Activated CD8-positive, alpha-beta T cell treated with anti-CD3 and anti-CD28 coated beads for 36 hours (primary cell): ENCODE measurements at regions of chr17 and their contacts with region 1.

Region 1: GRCh38 chr17:57671667-57672632 is 73.1 kb downstream of the CCDC182 start:
- DNase-seq: peak; percentile 82
- ATAC-seq: peak; percentile 87
- H3K4me3 Mint-ChIP-seq: no peak overlapping the region
- H3K27ac Mint-ChIP-seq: peak overlapping the region; percentile 86
- H3K4me1 Mint-ChIP-seq: peaks cover 37% of the 10 kb centered on the region
- H3K27me3 Mint-ChIP-seq: no peaks in the 10 kb centered on the region
- CTCF ChIP-seq: peak; percentile 94

Region 2: DNA sequence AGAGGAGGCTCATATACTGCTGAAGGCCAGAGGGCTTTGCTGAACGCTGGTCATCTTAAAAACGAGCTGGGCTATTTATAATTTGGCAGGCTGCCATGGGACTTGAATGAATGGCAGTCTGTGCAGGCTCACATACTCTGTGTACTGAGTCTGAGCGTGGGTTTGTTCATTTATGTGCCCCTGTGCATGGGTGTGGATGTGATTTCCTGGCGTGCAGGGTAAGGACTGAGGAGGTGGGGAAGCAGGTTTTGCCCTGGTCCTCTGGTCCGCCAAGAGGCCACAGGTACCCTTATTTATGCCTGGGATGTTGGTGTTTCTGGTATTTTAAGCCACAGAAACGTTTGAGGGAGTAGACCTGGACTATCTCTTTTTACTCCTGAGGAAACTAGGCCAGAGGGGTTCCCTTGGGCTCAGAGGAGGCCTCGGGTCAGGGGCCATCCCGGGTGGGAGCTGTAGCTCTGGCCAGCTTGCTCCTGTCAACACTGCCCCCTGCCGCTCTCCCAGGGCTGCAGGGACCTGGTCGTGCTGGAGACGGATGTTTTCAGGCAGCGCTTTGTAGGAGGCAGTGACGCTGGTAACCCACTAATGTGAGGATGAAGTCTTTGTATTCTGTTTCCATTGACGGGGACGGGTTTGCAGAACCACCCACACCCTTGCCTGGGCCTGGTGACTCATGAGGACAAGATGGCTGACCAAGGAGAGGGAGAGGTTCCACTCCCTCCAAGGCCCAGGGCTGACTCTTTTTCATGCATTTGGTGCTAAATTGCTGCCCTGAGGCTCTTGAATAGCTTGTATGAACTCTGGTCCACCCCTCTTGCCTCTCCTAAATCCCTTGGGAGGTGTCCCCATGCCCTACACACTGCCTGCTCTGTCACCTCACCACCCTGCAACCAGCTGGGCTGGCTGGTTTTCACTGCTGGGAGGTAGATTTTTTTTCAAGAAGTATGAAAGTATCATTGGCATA is 231.1 kb before region 1 on chr17:
- CTCF ChIA-PET with region 1: interaction called, 10 read pairs
- POLR2A ChIA-PET with region 1: no interaction called
- intact Hi-C with region 1: no loop called
- DNase-seq: peak; percentile 95
- ATAC-seq: peak; percentile 86
- H3K4me3 Mint-ChIP-seq: peak overlapping the region; percentile 50
- H3K27ac Mint-ChIP-seq: peak overlapping the region; percentile 97
- H3K4me1 Mint-ChIP-seq: peaks cover 57% of the 10 kb centered on the region
- H3K27me3 Mint-ChIP-seq: no peaks in the 10 kb centered on the region
- CTCF ChIP-seq: peak; percentile 76

Region 3: DNA sequence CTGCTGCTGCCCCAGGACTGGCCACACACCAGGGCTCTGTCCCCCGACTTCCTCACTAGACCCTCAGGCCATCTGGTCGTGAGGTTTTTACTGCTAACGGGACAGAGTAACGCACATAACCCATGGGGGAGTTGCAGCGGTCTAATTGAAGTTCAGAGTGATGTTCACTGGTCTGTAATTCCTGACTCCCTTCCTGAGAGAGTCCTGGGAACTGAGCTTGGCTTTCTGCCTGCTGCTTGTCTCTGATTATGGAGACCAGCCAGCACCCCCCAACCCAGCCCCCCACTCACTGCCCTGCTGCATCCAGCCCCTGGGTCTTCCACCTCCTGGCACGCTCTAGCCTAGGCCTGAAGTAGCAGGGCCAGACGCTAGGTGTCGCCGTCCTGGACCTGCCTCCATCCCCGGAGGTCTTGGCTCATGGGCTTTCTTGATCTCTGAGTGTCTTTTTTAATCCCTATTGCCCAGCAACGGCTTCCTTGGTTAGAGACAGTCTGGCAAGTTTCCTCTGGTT is 119.8 kb before region 1 on chr17:
- CTCF ChIA-PET with region 1: interaction called, 18 read pairs
- POLR2A ChIA-PET with region 1: no interaction called
- intact Hi-C with region 1: no loop called
- DNase-seq: peak; percentile 60
- ATAC-seq: peak; percentile 79
- H3K4me3 Mint-ChIP-seq: no peak overlapping the region
- H3K27ac Mint-ChIP-seq: no peak overlapping the region
- H3K4me1 Mint-ChIP-seq: peaks cover 36% of the 10 kb centered on the region
- H3K27me3 Mint-ChIP-seq: no peaks in the 10 kb centered on the region
- CTCF ChIP-seq: peak; percentile 48

Region 4: GRCh38 chr17:57597531-57598453 is 74.2 kb before region 1 on chr17:
- CTCF ChIA-PET with region 1: interaction called, 67 read pairs
- POLR2A ChIA-PET with region 1: interaction called, 3 read pairs
- intact Hi-C with region 1: loop called (anchors 5 kb)
- DNase-seq: peak; percentile 55
- ATAC-seq: no peak
- H3K4me3 Mint-ChIP-seq: no peak overlapping the region
- H3K27ac Mint-ChIP-seq: peak overlapping the region; percentile 95
- H3K4me1 Mint-ChIP-seq: peaks cover 60% of the 10 kb centered on the region
- H3K27me3 Mint-ChIP-seq: no peaks in the 10 kb centered on the region
- CTCF ChIP-seq: peak; percentile 81

Region 5: DNA sequence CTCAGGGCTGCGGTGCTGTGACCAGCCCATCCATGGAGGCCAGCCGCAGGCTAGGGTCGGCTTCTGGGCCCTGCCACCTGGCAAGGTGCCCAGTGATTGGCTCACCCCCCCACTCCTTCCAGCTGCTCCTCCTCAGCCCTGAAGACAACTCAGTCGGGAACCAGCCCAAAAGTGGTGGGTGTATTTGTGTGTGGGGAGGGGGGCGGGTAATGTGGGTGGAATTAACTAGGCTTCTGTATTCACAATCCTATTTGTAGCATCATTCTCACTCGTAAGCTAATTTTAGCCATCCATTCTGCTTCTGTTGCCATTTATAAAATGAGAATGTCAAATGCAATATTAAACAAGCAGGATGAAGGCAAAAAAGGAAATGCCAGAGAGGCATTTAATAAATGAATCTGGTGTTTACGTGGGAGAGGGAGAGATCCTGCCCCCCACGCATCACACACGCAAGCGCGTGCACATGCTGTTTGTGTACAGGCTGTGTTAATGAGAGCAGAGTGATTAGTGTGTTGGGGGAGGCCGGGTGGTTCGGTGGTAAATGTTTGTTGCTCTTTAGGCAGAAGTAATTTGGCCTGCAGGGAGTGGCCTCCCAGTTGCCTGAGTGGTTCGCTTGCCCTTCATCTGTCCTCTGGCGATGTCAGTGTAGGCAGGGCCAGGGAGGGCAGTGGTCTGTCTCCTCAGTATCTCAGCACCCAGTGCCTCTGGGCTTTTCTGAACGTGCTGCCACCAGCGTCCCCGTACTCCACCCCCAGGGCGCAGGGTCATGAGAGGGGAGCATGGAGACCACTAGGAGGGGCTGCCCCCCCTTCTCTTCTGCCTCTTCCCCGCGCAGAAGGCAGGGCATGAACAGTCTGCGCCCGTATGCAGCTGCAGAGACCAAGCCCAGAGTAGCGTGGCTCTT is 66.9 kb before region 1 on chr17:
- CTCF ChIA-PET with region 1: interaction called, 67 read pairs
- POLR2A ChIA-PET with region 1: interaction called, 4 read pairs
- intact Hi-C with region 1: loop called (anchors 5 kb)
- DNase-seq: peak; percentile 74
- ATAC-seq: peak; percentile 51
- H3K4me3 Mint-ChIP-seq: peak overlapping the region; percentile 40
- H3K27ac Mint-ChIP-seq: peak overlapping the region; percentile 93
- H3K4me1 Mint-ChIP-seq: peaks cover 84% of the 10 kb centered on the region
- H3K27me3 Mint-ChIP-seq: no peaks in the 10 kb centered on the region
- CTCF ChIP-seq: no peak

Region 6: GRCh38 chr17:57696050-57696449 is 24.1 kb after region 1 on chr17:
- CTCF ChIA-PET with region 1: interaction called, 12 read pairs
- POLR2A ChIA-PET with region 1: interaction called, 3 read pairs
- intact Hi-C with region 1: no loop called
- DNase-seq: no peak
- ATAC-seq: no peak
- H3K4me3 Mint-ChIP-seq: no peak overlapping the region
- H3K27ac Mint-ChIP-seq: no peak overlapping the region
- H3K4me1 Mint-ChIP-seq: peaks cover 13% of the 10 kb centered on the region
- H3K27me3 Mint-ChIP-seq: no peaks in the 10 kb centered on the region
- CTCF ChIP-seq: no peak

Region 7: DNA sequence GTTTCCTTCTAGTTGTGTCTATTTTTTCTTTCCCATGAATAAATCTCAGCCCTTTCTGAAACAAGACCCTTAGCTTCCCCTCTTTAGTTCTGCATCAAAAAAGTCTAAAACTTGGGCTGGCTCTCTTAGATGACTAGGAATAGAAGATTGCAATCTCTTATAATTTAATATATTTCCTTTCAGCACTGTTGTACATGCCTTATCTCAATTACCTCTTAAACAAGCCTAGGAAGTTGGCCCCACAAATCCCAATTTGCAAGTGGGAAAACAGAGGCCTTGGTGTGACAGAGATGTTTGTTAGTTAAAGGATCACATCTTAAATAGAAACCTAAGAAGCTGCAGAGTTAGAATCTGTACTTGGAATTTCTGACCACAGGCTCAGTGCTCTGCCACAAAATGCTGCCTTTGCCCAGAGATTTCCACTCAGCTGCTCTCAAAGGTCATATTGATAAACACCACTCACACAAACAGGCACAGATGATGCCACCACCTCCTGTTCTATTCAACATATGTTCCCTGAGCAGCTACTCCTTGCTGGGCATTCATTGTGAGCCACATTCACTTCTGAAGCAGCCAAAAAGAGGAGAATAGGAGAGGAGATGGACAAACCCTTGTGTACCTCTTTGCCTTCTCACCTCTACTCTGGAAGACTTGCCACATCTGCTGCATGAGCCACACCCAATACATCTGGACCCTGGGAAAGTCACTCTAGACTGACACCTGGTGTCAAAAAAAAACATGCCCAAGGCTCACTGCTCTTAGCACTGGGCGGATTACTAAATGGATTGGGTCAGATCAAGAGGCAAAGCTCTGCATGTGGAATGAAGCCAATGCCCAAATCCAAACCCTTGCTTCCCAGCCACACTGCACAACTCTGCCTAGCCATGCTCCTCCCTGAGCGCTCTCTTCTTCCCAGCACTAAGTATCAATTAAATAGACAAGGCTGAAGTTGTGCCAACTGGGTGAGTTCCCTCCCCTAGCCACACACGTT is 67.7 kb after region 1 on chr17:
- CTCF ChIA-PET with region 1: interaction called, 11 read pairs
- POLR2A ChIA-PET with region 1: no interaction called
- intact Hi-C with region 1: no loop called
- DNase-seq: peak; percentile 18
- ATAC-seq: peak; percentile 79
- H3K4me3 Mint-ChIP-seq: no peak overlapping the region
- H3K27ac Mint-ChIP-seq: no peak overlapping the region
- H3K4me1 Mint-ChIP-seq: peaks cover 5% of the 10 kb centered on the region
- H3K27me3 Mint-ChIP-seq: no peaks in the 10 kb centered on the region
- CTCF ChIP-seq: peak; percentile 58

Region 8: GRCh38 chr17:57823469-57824401 is 151.8 kb after region 1 on chr17:
- CTCF ChIA-PET with region 1: no interaction called
- POLR2A ChIA-PET with region 1: no interaction called
- intact Hi-C with region 1: no loop called
- DNase-seq: no peak
- ATAC-seq: no peak
- H3K4me3 Mint-ChIP-seq: no peak overlapping the region
- H3K27ac Mint-ChIP-seq: no peak overlapping the region
- H3K4me1 Mint-ChIP-seq: no peaks in the 10 kb centered on the region
- H3K27me3 Mint-ChIP-seq: no peaks in the 10 kb centered on the region
- CTCF ChIP-seq: no peak